B cell (primary cell): ENCODE measurements at regions of chr7 and their contacts with region 1.

Region 1: DNA sequence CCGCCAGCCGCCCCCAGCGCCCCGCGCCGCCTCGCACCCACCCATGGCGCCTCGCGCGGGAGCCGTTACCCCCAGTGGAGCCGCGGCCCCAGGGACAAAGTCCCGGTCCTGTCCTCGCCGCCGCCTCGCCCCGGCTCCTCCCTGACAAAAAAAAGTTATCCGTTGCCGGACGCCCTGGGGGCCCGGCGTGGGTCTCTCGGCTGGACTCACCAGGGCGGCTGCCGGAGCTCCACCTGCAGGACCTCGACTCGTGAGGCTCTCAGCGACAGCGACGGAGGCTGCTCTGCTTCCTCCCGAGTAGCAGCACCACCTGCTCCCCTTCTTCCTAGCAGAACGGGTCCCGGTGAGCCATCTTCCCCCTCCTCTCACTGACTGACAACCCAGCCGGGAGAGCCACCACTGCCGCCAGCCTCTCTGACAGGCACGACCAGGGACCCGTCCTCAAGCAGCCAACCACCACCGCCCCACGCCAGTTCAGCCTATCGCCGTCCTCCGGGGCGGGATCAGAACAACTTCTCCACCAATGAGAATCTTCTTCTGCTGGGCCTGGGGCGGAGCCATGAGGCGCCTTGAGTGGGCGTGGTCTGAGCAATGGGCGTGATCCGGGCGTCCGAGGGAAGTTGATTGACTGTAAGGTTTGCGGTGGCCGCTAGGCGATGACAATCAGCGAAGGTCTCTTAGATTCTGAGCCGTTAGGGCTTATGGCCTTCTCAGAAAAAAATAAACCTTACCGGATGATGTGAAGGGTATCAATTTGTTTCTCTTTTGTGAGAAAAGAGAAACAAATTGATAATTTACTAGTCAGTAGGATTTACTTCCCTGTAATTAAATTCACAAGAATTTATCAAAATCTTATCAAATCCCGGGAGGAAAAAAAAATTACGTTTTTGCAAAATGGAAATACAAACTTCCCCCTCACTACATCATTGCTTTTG is at the start of gene HYCC1:
- DNase-seq: peak; percentile 99
- ATAC-seq: peak; percentile 96
- H3K4me3 ChIP-seq: peak within 1 kb of the TSS; percentile 68 to 85 (median 80)
- H3K4me3 Mint-ChIP-seq: peak within 1 kb of the TSS; percentile 99
- H3K27ac ChIP-seq: peak within 1 kb of the TSS; percentile 63 to 70
- H3K27ac Mint-ChIP-seq: peak within 1 kb of the TSS; percentile 98
- H3K4me1 ChIP-seq: peaks cover 73 to 74% of the 10 kb centered on the region in 2 donors
- H3K4me1 Mint-ChIP-seq: peaks cover 42% of the 10 kb centered on the region
- H3K27me3 ChIP-seq: no peaks in the 10 kb centered on the region
- H3K27me3 Mint-ChIP-seq: no peaks in the 10 kb centered on the region
- CTCF ChIP-seq: peak; percentile 72
- total RNA-seq, gene HYCC1: 39.6 and 40.8 TPM in 2 replicates

Region 2: GRCh38 chr7:22822486-22823141 is 191.4 kb before region 1 on chr7 and contains the start of gene TOMM7:
- CTCF ChIA-PET with region 1: no interaction called
- POLR2A ChIA-PET with region 1: no interaction called
- intact Hi-C with region 1: loop called (anchors 1 kb)
- DNase-seq: peak; percentile 97
- ATAC-seq: peak; percentile 98
- H3K4me3 ChIP-seq: peak within 1 kb of the TSS; percentile 82 to 97 (median 94)
- H3K4me3 Mint-ChIP-seq: peak within 1 kb of the TSS; percentile 98
- H3K27ac ChIP-seq: peak within 1 kb of the TSS; percentile 79 to 81
- H3K27ac Mint-ChIP-seq: peak within 1 kb of the TSS; percentile 97
- H3K4me1 ChIP-seq: peaks cover 12 to 21% of the 10 kb centered on the region in 2 donors
- H3K4me1 Mint-ChIP-seq: peaks cover 32% of the 10 kb centered on the region
- H3K27me3 ChIP-seq: no peaks in the 10 kb centered on the region
- H3K27me3 Mint-ChIP-seq: peaks cover 10% of the 10 kb centered on the region
- CTCF ChIP-seq: no peak
- total RNA-seq, gene TOMM7: 400 and 437 TPM in 2 replicates

Region 3: DNA sequence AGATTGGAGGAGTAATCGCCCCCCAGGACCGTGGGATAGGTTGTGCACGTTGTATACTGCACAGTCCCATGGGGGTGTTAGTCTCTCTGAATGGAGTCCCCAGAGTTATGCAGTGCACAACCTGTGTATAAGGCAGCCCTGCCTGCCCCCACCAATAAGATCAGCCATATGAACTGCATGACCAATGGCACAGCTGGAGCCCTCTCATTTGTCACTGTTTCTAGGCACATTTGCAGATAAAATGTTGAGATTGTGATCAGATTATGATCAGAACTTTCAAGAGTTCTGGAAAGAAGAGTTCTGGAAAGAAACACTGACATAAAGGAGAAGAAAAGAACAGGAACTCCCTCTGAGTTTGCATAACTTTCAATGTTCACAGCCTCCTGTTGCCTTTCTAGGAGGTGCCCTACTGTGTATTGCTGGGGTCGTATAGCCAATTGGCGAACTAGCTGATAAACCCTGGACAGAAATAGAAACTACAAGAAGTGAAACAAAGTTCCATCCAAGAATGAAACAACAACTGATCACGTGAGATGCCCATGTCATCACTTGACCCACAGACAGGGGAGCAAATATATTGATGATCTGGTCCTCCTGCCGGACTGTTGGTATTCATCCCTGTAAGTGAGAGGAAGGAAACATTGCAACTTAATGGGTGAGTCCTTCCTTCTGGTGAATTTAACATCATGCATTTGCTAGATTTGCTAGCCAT is 141.7 kb before region 1 on chr7:
- CTCF ChIA-PET with region 1: no interaction called
- POLR2A ChIA-PET with region 1: no interaction called
- intact Hi-C with region 1: loop called (anchors 5 kb)
- DNase-seq: peak; percentile 64
- ATAC-seq: peak; percentile 98
- H3K4me3 ChIP-seq: peak overlapping the region in 4 of 5 experiments; percentile 24 to 51 (median 38)
- H3K4me3 Mint-ChIP-seq: peak overlapping the region; percentile 89
- H3K27ac ChIP-seq: peak overlapping the region; percentile 36 to 42
- H3K27ac Mint-ChIP-seq: peak overlapping the region; percentile 91
- H3K4me1 ChIP-seq: peaks cover 17 to 23% of the 10 kb centered on the region in 2 donors
- H3K4me1 Mint-ChIP-seq: peaks cover 31% of the 10 kb centered on the region
- H3K27me3 ChIP-seq: no peaks in the 10 kb centered on the region
- H3K27me3 Mint-ChIP-seq: no peaks in the 10 kb centered on the region
- CTCF ChIP-seq: no peak

Region 4: DNA sequence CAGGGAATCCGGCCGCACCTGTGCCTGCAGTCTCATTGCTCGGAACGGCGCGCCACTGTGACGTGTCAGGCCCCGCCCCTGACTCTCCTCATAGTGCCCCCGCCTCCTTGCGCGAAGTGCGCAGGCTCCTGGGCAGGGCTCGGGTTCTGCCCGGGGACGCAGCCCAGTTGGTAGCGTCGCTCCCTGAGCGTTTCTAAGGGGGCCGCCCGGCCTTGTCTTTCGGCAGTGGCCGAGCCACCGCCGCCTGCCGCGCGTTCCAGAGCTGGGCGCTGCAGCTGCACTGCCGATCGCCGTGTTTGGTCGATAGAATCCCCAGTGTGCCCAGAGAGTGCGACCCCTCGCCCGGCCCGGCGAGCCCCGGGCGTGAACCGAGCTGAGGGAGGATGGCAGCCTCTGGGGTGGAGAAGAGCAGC is 91.7 kb after region 1 on chr7 and contains the start of gene KLHL7:
- CTCF ChIA-PET with region 1: no interaction called
- POLR2A ChIA-PET with region 1: no interaction called
- intact Hi-C with region 1: loop called (anchors 1 kb)
- DNase-seq: peak; percentile 96
- ATAC-seq: peak; percentile 96
- H3K4me3 ChIP-seq: peak within 1 kb of the TSS; percentile 86 to 99 (median 94)
- H3K4me3 Mint-ChIP-seq: peak within 1 kb of the TSS; percentile 99
- H3K27ac ChIP-seq: peak within 1 kb of the TSS; percentile 88 to 95
- H3K27ac Mint-ChIP-seq: peak within 1 kb of the TSS; percentile 97
- H3K4me1 ChIP-seq: peaks cover 15 to 16% of the 10 kb centered on the region in 2 donors
- H3K4me1 Mint-ChIP-seq: peaks cover 32% of the 10 kb centered on the region
- H3K27me3 ChIP-seq: no peaks in the 10 kb centered on the region
- H3K27me3 Mint-ChIP-seq: no peaks in the 10 kb centered on the region
- CTCF ChIP-seq: no peak
- total RNA-seq, gene KLHL7: 22.8 and 29.5 TPM in 2 replicates